Activated CD8-positive, alpha-beta memory T cell treated with anti-CD3 and anti-CD28 coated beads, Interleukin-2, amount 10 ng/mL, durations not matched to agents 7 days and 5 days (primary cell): ENCODE measurements at regions of chr10 and their contacts with region 1.

Region 1: DNA sequence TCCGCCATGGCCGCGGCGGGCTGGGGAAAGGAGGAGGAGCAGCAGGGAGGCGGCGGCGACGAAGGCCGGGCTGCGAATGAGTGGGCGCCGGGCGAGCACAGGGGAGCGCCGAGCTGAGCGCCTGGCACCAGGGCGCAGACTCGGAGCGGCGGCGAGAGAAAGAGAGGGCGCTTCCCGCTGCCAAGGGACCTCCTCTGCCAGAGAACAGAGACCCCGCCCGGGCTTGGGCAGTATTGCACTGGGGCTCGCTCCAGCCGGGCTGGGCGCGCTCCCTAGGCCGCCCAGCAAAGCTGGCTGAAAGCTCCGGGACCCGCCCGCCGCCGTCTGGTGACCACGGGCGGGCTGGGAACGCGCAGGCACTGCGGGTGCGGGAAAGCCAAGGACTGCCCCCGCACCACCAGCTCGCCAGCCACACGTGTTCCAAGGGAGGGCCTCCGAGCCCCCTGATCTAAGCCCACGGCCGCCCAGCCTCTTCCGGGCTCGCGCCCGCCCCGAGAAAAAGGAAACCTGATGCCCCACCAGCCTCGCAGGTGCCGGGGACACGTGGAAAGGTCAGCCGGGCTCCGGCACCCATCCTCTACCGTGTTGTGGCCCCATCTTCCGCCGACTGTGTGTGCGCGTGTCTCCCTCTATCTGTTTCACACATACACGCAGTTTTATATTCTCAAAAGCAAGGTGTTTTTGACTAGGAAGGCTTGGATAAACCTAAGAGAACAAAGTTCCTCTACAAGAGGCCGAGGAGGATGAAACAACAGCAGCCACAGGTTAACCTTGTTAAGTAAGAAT is at the start of gene CCDC6:
- DNase-seq: peak; percentile 94
- ATAC-seq: peak; percentile 86
- H3K4me3 Mint-ChIP-seq: peak within 1 kb of the TSS; percentile 91
- H3K27ac Mint-ChIP-seq: peak within 1 kb of the TSS; percentile 90
- H3K4me1 Mint-ChIP-seq: peaks cover 51% of the 10 kb centered on the region
- H3K27me3 Mint-ChIP-seq: no peaks in the 10 kb centered on the region
- total RNA-seq, gene CCDC6: 16.8 to 34.4 TPM

Region 2: GRCh38 chr10:59779756-59780533 is 126.7 kb before region 1 on chr10:
- CTCF ChIA-PET with region 1: no interaction called
- DNase-seq: no peak
- ATAC-seq: no peak
- H3K4me3 Mint-ChIP-seq: no peak overlapping the region
- H3K27ac Mint-ChIP-seq: no peak overlapping the region
- H3K4me1 Mint-ChIP-seq: no peaks in the 10 kb centered on the region
- H3K27me3 Mint-ChIP-seq: no peaks in the 10 kb centered on the region

Region 3: DNA sequence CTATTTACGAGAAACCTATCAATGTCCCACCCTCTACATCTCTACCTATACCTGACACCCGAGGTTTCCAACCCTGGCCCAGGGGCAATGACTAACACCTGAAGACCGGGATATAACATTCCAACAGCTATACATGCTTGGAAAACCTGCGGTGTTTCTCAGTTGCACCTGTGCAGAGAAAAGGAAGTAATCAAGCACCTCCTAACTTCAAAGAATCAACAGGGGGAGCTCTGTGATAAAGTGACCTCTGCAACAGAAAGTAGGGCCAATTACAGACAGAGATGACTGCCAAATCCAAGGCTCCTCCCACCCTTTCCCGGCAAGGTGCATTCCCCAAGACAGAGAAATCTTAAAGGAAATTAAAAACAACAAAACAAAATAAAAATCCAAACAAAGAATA is 41.5 kb before region 1 on chr10:
- CTCF ChIA-PET with region 1: interaction called, 78 read pairs
- DNase-seq: no peak
- ATAC-seq: peak; percentile 73
- H3K4me3 Mint-ChIP-seq: no peak overlapping the region
- H3K27ac Mint-ChIP-seq: no peak overlapping the region
- H3K4me1 Mint-ChIP-seq: peaks cover 28% of the 10 kb centered on the region
- H3K27me3 Mint-ChIP-seq: no peaks in the 10 kb centered on the region

Region 4: GRCh38 chr10:59879361-59879913 is 27.2 kb before region 1 on chr10:
- CTCF ChIA-PET with region 1: interaction called, 17 read pairs
- DNase-seq: no peak
- ATAC-seq: peak; percentile 49
- H3K4me3 Mint-ChIP-seq: peak overlapping the region; percentile 49
- H3K27ac Mint-ChIP-seq: peak overlapping the region; percentile 76
- H3K4me1 Mint-ChIP-seq: peaks cover 69% of the 10 kb centered on the region
- H3K27me3 Mint-ChIP-seq: no peaks in the 10 kb centered on the region

Region 5: DNA sequence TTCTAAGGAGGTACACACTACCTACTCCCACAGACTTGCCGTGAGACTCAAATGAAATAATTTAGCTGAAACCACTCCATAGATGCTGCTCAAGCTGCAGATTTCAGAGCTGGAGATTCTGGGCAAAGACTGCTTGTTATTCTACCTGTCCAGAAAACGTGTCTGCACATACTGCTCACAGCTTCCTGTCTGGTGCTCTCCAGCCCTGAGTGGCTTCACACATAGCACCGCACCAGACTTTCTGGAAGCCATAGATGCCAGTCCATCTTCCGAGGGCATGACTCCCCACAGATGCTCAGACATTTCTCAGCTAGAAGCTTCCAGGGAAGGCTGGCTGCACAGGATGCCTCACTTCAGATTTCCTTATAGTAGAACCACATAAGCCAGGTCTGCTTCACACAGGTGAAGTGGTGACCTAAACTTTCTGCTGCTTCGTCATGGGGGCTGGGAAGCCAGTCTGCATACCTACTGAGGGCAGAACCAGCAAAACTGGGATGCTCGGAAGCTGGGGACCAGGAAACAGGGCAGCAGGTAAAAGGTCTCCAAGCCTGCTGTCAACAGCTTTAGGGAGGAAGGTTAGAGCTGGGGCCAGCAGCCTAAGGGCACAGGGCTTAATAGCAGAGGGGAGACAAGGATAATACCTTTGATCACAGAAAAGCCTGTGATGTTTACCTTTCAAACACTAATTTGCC is 18.5 kb before region 1 on chr10:
- CTCF ChIA-PET with region 1: interaction called, 19 read pairs
- DNase-seq: peak; percentile 53
- ATAC-seq: peak; percentile 49
- H3K4me3 Mint-ChIP-seq: no peak overlapping the region
- H3K27ac Mint-ChIP-seq: peak overlapping the region; percentile 65
- H3K4me1 Mint-ChIP-seq: peaks cover 70% of the 10 kb centered on the region
- H3K27me3 Mint-ChIP-seq: no peaks in the 10 kb centered on the region

Region 6: DNA sequence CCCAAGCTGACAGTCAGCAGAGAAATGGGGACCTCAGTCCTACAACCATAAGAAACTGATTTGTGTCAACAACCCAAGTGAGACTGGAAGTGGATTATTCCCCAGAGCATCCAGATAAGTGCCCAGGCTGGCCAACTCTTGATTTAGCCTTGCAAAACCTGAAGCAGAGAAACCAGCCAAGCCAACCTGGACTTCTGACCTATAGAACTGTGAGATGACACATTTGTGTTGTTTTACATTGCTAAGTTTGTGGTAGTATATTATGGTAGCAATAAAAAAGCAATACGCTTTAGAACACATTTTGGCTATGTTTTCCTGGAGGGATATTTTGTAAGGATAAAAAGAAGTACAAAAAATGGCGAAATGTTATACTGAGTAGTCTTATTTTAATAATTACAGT is 19.5 kb after region 1 on chr10:
- CTCF ChIA-PET with region 1: no interaction called
- DNase-seq: no peak
- ATAC-seq: no peak
- H3K4me3 Mint-ChIP-seq: no peak overlapping the region
- H3K27ac Mint-ChIP-seq: no peak overlapping the region
- H3K4me1 Mint-ChIP-seq: no peaks in the 10 kb centered on the region
- H3K27me3 Mint-ChIP-seq: peaks cover 22% of the 10 kb centered on the region